OCI-LY7 (cell line): ENCODE measurements at regions of chr2 and their contacts with region 1.

Region 1: DNA sequence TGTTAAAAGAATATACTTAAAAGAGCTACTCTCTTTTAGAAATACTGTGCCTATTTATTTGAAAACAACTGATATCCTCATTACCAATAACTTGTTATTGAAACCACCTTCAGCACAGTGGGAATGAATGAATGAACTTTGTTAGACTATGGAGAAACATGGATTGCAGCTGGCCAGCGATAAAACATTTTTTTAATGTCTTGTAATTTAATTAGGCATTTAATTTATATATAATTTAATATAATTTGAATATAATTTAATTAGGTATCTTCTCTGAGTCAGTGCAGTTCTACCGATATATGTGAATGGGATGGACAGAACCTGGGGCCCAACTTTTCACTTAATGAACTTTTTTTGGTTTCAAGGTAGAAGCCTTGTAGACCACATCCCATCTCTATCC is 94.4 kb downstream of the KCTD18 start:
- DNase-seq: no peak
- H3K4me3 ChIP-seq: no peak overlapping the region
- H3K27ac ChIP-seq: no peak overlapping the region
- H3K4me1 ChIP-seq: no peaks in the 10 kb centered on the region
- CTCF ChIP-seq: no peak

Region 2: GRCh38 chr2:200426754-200427153 is 11.3 kb after region 1 on chr2:
- CTCF ChIA-PET with region 1: no interaction called
- POLR2A ChIA-PET with region 1: interaction called, 13 read pairs
- intact Hi-C with region 1: no loop called
- DNase-seq: no peak
- H3K4me3 ChIP-seq: no peak overlapping the region
- H3K27ac ChIP-seq: no peak overlapping the region
- H3K4me1 ChIP-seq: no peaks in the 10 kb centered on the region
- CTCF ChIP-seq: no peak